Activated CD8-positive, alpha-beta T cell treated with anti-CD3 and anti-CD28 coated beads for 36 hours (primary cell): ENCODE measurements at regions of chr1 and their contacts with region 1.

Region 1: DNA sequence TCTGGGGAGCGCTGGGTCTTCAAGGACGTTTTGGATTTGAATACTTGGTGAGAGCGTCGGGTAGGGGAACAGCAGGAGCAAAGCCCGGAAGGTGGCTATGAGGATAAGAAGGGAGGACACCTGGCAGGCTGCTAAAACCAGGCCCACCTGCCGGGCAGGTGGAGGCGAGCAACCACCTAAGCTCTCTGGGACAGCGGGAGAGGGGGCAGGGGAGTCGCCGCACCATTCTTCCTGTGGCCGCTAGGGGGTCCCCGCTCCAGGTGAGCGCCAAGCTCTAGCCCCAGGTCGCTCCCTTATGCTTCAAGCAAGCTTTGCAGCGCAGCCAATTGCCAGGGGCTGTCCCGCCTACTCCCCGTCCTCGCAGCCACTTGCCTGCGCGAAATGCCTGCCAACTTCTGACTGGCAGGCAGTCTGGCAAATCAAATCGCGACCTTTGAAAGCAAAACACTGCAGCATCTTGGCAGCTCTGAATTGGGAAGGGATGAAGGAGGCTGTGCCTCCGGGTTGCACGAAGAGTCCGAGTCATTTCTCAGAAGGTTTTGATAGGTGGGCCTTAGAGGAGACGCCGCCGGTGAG is at the start of gene NIPAL3:
- DNase-seq: peak; percentile 99
- ATAC-seq: peak; percentile 93
- H3K4me3 Mint-ChIP-seq: peak within 1 kb of the TSS; percentile 98
- H3K27ac Mint-ChIP-seq: peak within 1 kb of the TSS; percentile 95
- H3K4me1 Mint-ChIP-seq: peaks cover 47% of the 10 kb centered on the region
- H3K27me3 Mint-ChIP-seq: no peaks in the 10 kb centered on the region
- CTCF ChIP-seq: peak; percentile 82
- total RNA-seq, gene NIPAL3: 33.2 to 33.3 TPM

Region 2: GRCh38 chr1:24403806-24404205 is 11.6 kb before region 1 on chr1:
- CTCF ChIA-PET with region 1: interaction called, 13 read pairs
- POLR2A ChIA-PET with region 1: interaction called, 6 read pairs
- intact Hi-C with region 1: no loop called
- DNase-seq: no peak
- ATAC-seq: no peak
- H3K4me3 Mint-ChIP-seq: no peak overlapping the region
- H3K27ac Mint-ChIP-seq: no peak overlapping the region
- H3K4me1 Mint-ChIP-seq: peaks cover 8% of the 10 kb centered on the region
- H3K27me3 Mint-ChIP-seq: no peaks in the 10 kb centered on the region
- CTCF ChIP-seq: no peak

Region 3: DNA sequence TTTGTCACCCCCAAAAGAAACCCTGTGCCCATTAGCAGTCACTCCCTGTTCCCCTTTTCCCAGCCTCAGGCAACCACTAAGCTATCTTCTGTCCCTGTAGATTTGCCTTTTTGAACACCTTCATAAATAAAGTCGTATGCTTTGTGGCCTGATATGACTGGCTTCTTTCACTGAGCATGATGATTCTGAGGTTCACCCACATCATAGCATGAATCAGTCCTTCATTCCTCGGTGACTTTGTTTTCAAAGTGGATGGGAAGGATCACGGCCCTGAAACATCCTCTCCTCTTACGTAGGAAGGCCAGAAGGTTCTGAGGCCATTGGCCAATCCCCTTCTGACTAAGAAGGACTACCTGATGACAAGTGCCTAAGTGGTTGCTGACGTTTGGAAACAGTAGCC is 39.3 kb after region 1 on chr1:
- CTCF ChIA-PET with region 1: interaction called, 10 read pairs
- POLR2A ChIA-PET with region 1: no interaction called
- intact Hi-C with region 1: no loop called
- DNase-seq: no peak
- ATAC-seq: no peak
- H3K4me3 Mint-ChIP-seq: no peak overlapping the region
- H3K27ac Mint-ChIP-seq: no peak overlapping the region
- H3K4me1 Mint-ChIP-seq: peaks cover 3% of the 10 kb centered on the region
- H3K27me3 Mint-ChIP-seq: no peaks in the 10 kb centered on the region
- CTCF ChIP-seq: no peak

Region 4: DNA sequence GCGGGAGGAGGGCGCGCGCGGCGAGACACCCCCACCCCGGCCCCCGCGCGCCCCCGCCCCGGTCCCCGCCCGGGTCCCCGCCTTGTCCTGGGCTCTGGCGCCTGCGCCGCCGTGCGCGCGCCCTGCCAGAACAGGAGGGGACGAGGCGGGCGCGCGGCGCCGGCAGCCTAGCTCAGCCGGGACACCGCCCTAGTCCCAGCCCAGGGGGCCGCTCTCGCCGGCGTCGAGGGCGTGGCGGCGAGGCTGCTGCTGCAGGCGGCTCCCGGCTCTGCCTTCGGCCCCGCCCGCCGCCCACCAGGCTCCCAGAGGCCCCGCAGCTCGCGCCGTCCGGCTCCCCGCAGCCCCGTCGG is 87.3 kb after region 1 on chr1 and contains the start of gene RCAN3:
- CTCF ChIA-PET with region 1: interaction called, 66 read pairs
- POLR2A ChIA-PET with region 1: interaction called, 17 read pairs
- intact Hi-C with region 1: loop called (anchors 5 kb)
- DNase-seq: peak; percentile 92
- ATAC-seq: peak; percentile 81
- H3K4me3 Mint-ChIP-seq: peak within 1 kb of the TSS; percentile 97
- H3K27ac Mint-ChIP-seq: peak within 1 kb of the TSS; percentile 98
- H3K4me1 Mint-ChIP-seq: peaks cover 58% of the 10 kb centered on the region
- H3K27me3 Mint-ChIP-seq: no peaks in the 10 kb centered on the region
- CTCF ChIP-seq: no peak
- total RNA-seq, gene RCAN3: 55.3 to 56.8 TPM

Region 5: DNA sequence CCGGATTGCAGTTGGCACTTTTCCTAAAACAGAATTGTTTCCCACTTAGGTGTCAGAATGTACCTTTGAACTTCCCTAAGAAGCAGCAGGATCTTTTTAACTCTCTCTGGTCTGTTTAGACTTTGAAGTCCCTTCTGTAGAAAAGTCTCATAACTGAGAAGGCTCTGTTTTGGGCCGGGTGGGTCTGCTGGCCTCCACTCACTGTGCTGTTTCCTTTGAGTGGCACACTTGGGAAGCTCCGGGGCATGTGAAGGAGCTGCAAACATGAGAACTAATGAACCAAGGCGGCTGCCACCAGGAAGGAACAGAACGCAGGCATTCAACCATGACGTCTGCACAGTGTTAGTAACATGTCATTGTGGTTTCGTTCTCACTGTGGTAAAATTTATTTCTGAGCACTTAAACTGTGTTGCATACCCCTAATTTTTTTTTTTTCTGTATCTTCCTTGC is 121.0 kb after region 1 on chr1:
- CTCF ChIA-PET with region 1: interaction called, 74 read pairs
- POLR2A ChIA-PET with region 1: interaction called, 4 read pairs
- intact Hi-C with region 1: loop called (anchors 5 kb)
- DNase-seq: peak; percentile 84
- ATAC-seq: peak; percentile 61
- H3K4me3 Mint-ChIP-seq: peak overlapping the region; percentile 72
- H3K27ac Mint-ChIP-seq: peak overlapping the region; percentile 98
- H3K4me1 Mint-ChIP-seq: peaks cover 71% of the 10 kb centered on the region
- H3K27me3 Mint-ChIP-seq: no peaks in the 10 kb centered on the region
- CTCF ChIP-seq: no peak

Region 6: GRCh38 chr1:24635195-24635843 is 219.9 kb after region 1 on chr1:
- CTCF ChIA-PET with region 1: interaction called, 13 read pairs
- POLR2A ChIA-PET with region 1: interaction called, 3 read pairs
- intact Hi-C with region 1: loop called (anchors 5 kb)
- DNase-seq: no peak
- ATAC-seq: peak; percentile 83
- H3K4me3 Mint-ChIP-seq: no peak overlapping the region
- H3K27ac Mint-ChIP-seq: no peak overlapping the region
- H3K4me1 Mint-ChIP-seq: peaks cover 10% of the 10 kb centered on the region
- H3K27me3 Mint-ChIP-seq: no peaks in the 10 kb centered on the region
- CTCF ChIP-seq: peak; percentile 66